Activated B cell treated with CpG ODN at 0.5 μM for 24 hours (primary cell): ENCODE measurements at regions of chr16 and their contacts with region 1.

Region 1: GRCh38 chr16:88569985-88570690 is at the start of gene ZC3H18:
- DNase-seq: peak; percentile 99
- ATAC-seq: peak; percentile 92
- H3K4me3 Mint-ChIP-seq: peak within 1 kb of the TSS; percentile 86
- H3K27ac Mint-ChIP-seq: peak within 1 kb of the TSS; percentile 76
- H3K4me1 Mint-ChIP-seq: peaks cover 25% of the 10 kb centered on the region
- H3K27me3 Mint-ChIP-seq: no peaks in the 10 kb centered on the region
- CTCF ChIP-seq: no peak
- total RNA-seq, gene ZC3H18: 61.7 and 74.2 TPM in 2 replicates

Region 2: DNA sequence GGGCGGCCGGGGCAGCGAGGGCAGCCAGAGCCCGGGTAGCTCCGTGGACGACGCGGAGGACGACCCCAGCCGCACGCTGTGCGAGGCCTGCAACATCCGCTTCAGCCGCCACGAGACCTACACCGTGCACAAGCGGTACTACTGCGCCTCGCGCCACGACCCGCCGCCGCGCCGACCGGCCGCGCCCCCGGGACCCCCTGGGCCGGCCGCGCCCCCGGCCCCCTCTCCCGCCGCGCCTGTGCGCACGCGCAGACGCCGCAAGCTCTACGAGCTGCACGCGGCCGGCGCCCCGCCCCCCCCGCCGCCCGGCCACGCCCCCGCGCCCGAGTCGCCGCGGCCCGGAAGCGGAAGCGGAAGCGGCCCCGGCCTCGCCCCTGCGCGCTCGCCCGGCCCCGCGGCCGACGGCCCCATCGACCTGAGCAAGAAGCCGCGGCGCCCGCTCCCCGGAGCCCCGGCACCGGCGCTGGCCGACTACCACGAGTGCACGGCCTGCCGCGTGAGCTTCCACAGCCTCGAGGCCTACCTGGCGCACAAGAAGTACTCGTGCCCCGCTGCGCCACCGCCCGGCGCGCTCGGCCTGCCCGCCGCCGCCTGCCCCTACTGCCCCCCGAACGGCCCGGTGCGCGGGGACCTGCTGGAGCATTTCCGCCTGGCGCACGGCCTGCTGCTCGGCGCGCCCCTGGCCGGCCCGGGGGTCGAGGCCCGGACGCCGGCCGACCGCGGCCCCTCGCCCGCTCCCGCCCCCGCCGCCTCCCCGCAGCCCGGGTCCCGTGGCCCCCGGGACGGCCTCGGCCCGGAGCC is 36.0 kb before region 1 on chr16:
- CTCF ChIA-PET with region 1: no interaction called
- POLR2A ChIA-PET with region 1: interaction called, 4 read pairs
- intact Hi-C with region 1: loop called (anchors 1 kb)
- DNase-seq: peak; percentile 85
- ATAC-seq: peak; percentile 80
- H3K4me3 Mint-ChIP-seq: no peak overlapping the region
- H3K27ac Mint-ChIP-seq: no peak overlapping the region
- H3K4me1 Mint-ChIP-seq: peaks cover 12% of the 10 kb centered on the region
- H3K27me3 Mint-ChIP-seq: no peaks in the 10 kb centered on the region
- CTCF ChIP-seq: no peak

Region 3: DNA sequence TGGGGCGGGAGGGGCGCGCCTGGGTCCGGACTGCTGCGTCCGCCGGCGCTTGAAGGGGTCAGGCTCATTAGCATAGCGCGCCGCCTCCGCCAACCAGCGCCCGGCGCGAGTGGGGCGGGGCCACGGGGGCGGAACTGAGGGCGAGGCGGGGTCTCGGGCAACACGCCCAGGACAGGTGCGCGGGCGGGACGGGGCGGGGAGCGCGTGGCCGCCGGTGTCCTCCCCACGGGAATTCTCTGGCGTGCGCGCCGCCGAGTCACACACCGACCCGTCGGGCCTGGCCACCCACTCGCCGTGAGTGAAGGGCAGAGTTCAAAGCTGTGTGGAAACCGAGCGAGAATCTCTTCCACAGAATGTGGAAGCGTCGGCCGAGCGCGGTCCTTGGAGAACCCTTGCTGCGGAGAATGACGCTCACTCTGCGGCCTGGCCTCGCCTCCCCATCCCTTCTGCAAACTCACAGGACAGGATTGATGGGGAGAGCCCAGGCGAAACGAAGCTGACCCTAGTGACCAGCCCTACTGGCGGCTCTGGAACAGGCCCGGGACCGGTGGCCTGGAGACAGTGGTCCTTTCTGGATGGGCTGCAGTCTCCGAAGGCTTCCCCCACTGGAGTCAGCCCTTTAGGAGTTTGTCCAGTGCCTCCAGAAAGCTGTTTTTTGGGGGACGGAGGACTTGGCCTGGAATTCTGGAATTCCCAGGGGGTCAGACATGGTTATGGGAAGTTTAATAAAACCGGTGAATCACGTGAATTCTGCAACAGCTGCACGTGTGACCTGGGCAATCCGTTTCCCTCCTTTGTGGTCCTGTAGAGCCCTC is 116.5 kb after region 1 on chr16 and contains the start of gene SNAI3:
- CTCF ChIA-PET with region 1: no interaction called
- POLR2A ChIA-PET with region 1: interaction called, 4 read pairs
- intact Hi-C with region 1: loop called (anchors 5 kb)
- DNase-seq: peak; percentile 94
- ATAC-seq: peak; percentile 74
- H3K4me3 Mint-ChIP-seq: peak within 1 kb of the TSS; percentile 83
- H3K27ac Mint-ChIP-seq: no peak within 1 kb of the TSS
- H3K4me1 Mint-ChIP-seq: peaks cover 46% of the 10 kb centered on the region
- H3K27me3 Mint-ChIP-seq: no peaks in the 10 kb centered on the region
- CTCF ChIP-seq: no peak
- total RNA-seq, gene SNAI3: 1.5 and 2.7 TPM in 2 replicates